ENCODE measurements at regions of chr1 and their contacts with region 1.

Region 1: DNA sequence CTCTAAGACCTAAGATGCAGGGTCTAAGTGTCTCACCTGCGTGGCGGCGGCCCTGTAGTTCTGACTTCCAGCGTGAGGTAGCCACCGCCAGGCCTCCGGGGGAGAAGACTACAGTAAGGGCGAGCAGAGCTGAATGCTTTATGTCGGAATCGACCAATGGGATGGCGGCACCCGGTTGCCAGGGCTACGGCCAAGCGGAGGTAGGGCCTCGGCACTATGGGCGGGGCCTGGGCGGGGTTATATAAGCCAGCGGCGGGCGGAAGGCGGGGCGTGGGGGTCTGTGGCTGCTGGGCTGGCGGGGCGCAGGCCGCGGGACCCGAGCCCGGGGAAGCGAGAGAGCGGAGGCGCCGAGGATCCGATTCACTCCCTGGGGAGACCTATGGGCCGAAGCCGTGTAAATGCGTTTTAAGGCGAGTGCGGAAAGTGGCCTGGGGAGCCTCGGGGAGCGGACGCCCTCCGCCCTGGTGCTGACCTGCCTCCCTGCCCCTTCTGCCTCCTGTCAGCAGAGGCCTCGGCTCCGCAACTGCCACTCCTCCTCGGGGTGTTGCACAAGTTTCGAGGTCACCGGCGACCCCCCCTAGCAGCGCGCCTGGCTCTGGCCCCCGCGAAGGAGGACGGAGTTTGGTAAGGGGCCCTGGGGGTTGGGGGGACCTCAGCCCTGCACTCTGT is at the start of gene AZIN2:
- DNase-seq: peak; percentile 94 to 97
- ATAC-seq: peak; percentile 99
- H3K4me3 ChIP-seq: peak within 1 kb of the TSS; percentile 67
- H3K4me3 Mint-ChIP-seq: peak within 1 kb of the TSS; percentile 85
- H3K27ac ChIP-seq: no peak within 1 kb of the TSS
- H3K27ac Mint-ChIP-seq: peak within 1 kb of the TSS; percentile 24 to 78
- H3K4me1 ChIP-seq: peaks cover 22% of the 10 kb centered on the region
- H3K4me1 Mint-ChIP-seq: peaks cover 23 to 26% of the 10 kb centered on the region in 2 donors
- H3K27me3 ChIP-seq: no peaks in the 10 kb centered on the region
- H3K27me3 Mint-ChIP-seq: peaks cover 0 to 6% of the 10 kb centered on the region in 2 donors
- CTCF ChIP-seq: no peak
- total RNA-seq, gene AZIN2: 1.9 to 5.1 (median 4.1) TPM

Region 2: GRCh38 chr1:32716312-32717148 is 364.5 kb before region 1 on chr1:
- intact Hi-C with region 1: loop called (anchors 10 kb)
- DNase-seq: peak in 1 of 2 donors; percentile 61
- ATAC-seq: peak in 1 of 3 donors; percentile 27
- H3K4me3 ChIP-seq: no peak overlapping the region
- H3K4me3 Mint-ChIP-seq: no peak overlapping the region
- H3K27ac ChIP-seq: no peak overlapping the region
- H3K27ac Mint-ChIP-seq: no peak overlapping the region
- H3K4me1 ChIP-seq: peaks cover 11% of the 10 kb centered on the region
- H3K4me1 Mint-ChIP-seq: peaks cover 4 to 16% of the 10 kb centered on the region in 2 donors
- H3K27me3 ChIP-seq: no peaks in the 10 kb centered on the region
- H3K27me3 Mint-ChIP-seq: peaks cover 0 to 11% of the 10 kb centered on the region in 2 donors
- CTCF ChIP-seq: no peak

Region 3: GRCh38 chr1:33036526-33037503 is 44.2 kb before region 1 on chr1 and contains the start of gene AK2:
- intact Hi-C with region 1: loop called (anchors 2 kb)
- DNase-seq: peak; percentile 85 to 94
- ATAC-seq: peak; percentile 98 to 100 (median 99)
- H3K4me3 ChIP-seq: peak within 1 kb of the TSS; percentile 73
- H3K4me3 Mint-ChIP-seq: peak within 1 kb of the TSS; percentile 95
- H3K27ac ChIP-seq: peak within 1 kb of the TSS; percentile 65
- H3K27ac Mint-ChIP-seq: peak within 1 kb of the TSS; percentile 89 to 93
- H3K4me1 ChIP-seq: peaks cover 21% of the 10 kb centered on the region
- H3K4me1 Mint-ChIP-seq: peaks cover 32 to 39% of the 10 kb centered on the region in 2 donors
- H3K27me3 ChIP-seq: no peaks in the 10 kb centered on the region
- H3K27me3 Mint-ChIP-seq: no peaks in the 10 kb centered on the region
- CTCF ChIP-seq: no peak
- total RNA-seq, gene AK2: 64.8 to 94.0 (median 67.1) TPM